AG04449 (cell line): ENCODE measurements at regions of chr5 and their contacts with region 1.

Region 1: DNA sequence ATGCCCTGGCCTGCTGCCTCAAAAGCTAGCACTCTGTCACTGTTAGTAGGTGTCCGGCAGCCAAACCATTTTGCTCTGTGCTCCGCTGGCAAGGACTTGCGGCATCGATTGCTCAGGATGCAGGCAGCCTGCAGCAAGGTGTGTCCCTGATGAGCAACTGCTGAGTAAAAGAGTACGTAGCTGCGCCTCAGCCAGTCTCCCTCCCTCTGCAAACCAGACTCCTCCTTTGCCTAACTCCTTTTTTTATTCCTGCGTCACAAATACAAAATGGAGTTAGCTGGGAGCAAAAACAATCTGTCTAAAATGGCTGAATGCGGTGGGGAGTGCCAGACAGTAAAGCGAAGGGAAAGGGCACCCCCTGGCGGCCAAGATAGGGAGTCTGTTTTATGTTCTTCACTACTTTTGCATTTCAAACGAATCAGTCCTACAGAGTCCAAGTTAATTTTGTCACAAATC is 61.1 kb downstream of the DIAPH1 start:
- DNase-seq: peak; percentile 98
- H3K4me3 ChIP-seq: peak overlapping the region; percentile 32
- CTCF ChIP-seq: peak; percentile 72

Region 2: DNA sequence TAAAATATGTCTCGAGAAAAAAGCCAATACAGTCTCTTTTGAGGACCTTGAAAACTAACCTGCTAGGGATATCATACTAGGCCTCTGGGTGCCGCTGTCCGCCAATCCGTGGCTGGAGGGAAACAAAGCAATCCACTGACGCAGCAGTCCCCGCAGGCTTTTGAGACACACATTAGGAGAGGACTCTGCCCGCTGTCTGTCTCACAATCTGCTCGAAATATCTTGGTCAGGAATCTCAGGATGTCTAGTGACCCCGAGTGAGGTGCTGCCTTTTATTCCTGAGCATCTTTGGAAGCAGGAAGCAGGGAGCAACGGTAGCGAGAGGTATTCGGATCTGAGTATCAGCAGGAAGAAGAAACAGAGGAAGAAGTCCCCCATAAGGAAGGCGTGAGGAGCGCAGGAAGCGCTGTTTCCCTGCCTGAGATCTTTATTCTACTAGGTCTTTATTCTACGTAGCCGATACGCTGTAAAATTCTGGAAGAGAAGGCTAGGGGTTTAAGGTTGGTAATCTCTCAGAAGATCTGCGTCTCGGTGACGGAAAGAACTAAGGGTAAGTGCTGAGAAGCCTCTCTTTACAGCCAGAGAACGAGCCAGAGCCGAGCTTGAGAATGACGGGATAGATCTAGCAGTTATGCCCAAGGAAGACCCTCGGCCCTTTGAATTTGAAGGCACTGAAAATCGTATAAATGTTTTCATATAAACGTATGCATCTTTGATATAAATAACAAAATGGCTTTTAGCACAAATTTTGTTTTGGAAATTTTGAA is 231.4 kb before region 1 on chr5:
- CTCF ChIA-PET with region 1: interaction called, 209 read pairs
- POLR2A ChIA-PET with region 1: no interaction called
- DNase-seq: no peak
- H3K4me3 ChIP-seq: peak overlapping the region; percentile 64
- CTCF ChIP-seq: peak; percentile 70

Region 3: DNA sequence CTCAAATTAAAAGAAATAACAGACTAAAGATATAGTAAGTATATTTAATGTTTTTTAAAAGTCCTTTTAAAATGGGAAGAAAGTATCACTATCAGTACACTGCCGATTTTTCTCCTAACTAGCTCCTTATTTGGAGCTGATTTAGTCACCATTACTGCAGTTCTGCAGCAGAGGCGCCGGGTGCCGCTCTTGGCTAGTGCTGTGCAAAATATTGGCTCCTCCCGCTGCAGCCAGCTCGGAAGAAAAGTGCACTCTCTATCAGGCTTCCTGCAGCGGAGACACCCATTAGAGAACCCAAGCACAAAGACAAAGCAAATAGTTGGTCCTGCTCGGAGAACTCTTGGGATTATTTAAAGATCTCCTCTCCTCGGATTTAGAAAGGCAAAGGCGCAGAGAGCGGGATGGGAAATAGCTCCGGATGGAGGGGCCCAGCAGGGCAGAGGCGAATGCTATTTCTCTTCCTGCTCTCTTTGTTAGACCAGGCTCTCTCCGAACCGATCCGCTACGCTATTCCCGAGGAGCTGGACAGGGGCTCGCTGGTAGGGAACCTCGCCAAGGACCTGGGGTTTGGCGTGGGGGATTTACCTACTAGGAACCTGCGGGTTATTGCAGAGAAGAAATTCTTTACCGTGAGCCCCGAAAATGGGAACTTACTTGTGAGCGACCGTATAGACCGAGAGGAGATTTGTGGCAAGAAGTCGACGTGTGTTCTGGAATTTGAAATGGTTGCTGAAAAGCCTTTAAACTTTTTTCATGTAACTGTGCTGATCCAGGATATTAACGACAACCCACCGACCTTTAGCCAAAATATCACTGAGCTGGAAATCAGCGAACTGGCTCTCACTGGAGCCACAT is 187.5 kb before region 1 on chr5 and contains the start of gene PCDHGB3:
- CTCF ChIA-PET with region 1: interaction called, 99 read pairs
- POLR2A ChIA-PET with region 1: interaction called, 3 read pairs
- DNase-seq: no peak
- H3K4me3 ChIP-seq: peak within 1 kb of the TSS; percentile 45
- CTCF ChIP-seq: peak; percentile 40

Region 4: GRCh38 chr5:141412854-141413539 is 144.7 kb before region 1 on chr5 and contains the start of gene PCDHGA10:
- CTCF ChIA-PET with region 1: interaction called, 303 read pairs
- POLR2A ChIA-PET with region 1: interaction called, 5 read pairs
- DNase-seq: no peak
- H3K4me3 ChIP-seq: peak within 1 kb of the TSS; percentile 53
- CTCF ChIP-seq: peak; percentile 48

Region 5: GRCh38 chr5:141475625-141476131 is 82.0 kb before region 1 on chr5 and contains the start of gene PCDHGC3:
- CTCF ChIA-PET with region 1: interaction called, 99 read pairs
- POLR2A ChIA-PET with region 1: no interaction called
- DNase-seq: peak; percentile 77
- H3K4me3 ChIP-seq: peak within 1 kb of the TSS; percentile 84
- CTCF ChIP-seq: peak; percentile 50

Region 6: GRCh38 chr5:141524604-141525597 is 32.8 kb before region 1 on chr5:
- CTCF ChIA-PET with region 1: interaction called, 125 read pairs
- POLR2A ChIA-PET with region 1: interaction called, 3 read pairs
- DNase-seq: peak; percentile 76
- H3K4me3 ChIP-seq: peak overlapping the region; percentile 29
- CTCF ChIP-seq: peak; percentile 97

Region 7: GRCh38 chr5:141734501-141735230 is 177.0 kb after region 1 on chr5:
- CTCF ChIA-PET with region 1: no interaction called
- POLR2A ChIA-PET with region 1: no interaction called
- DNase-seq: no peak
- H3K4me3 ChIP-seq: no peak overlapping the region
- CTCF ChIP-seq: no peak